IMR-90 (cell line): ENCODE measurements at regions of chr19 and their contacts with region 1.

Region 1: DNA sequence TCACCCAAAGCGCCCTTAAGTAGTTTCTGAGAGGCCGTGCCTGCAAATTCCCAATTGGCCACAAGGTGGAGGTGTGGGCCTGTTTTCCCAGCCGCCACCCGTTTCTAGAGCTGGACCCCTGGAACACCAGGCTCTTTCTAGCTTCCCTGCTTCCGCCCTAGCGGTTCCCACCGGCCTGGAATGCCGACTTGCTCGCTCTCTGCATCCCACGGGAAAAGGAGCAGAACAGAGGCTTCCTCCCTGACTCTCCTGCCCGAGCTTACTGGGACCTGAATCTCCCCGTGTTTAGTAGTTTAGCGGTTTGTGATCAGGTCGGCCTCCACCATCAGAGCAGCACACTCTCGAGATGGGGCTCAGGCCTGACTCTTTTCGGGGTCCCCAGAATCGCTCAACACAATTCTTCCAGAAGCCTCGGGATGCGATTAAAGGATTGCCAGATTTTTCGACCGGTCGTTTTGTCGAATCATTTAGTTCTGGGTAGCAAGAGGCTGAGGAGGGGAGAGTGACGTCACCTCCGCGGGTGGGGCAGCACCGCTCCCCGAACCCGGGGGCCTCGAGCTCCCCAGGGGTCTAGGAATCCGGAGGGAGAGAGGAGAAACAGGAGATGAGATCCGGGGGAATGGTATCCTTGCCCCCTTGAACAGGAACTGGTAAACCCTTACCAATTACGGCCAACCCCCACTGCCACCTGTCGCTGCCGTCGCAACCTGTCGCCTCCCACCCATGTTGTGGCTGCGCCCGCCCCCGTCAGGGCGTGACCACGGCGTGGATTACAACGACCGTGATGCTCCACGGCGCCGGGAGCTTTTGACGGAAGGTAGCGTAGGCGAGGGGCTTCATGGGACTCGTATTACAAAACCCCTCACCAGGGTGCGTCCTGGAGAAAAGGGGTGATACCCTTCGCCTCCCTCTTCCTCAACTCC is 8.0 kb downstream of the NAPSA start:
- DNase-seq: peak; percentile 41
- ATAC-seq: peak; percentile 96
- H3K4me3 ChIP-seq: peak overlapping the region; percentile 36
- H3K27ac ChIP-seq: no peak overlapping the region
- H3K4me1 ChIP-seq: no peaks in the 10 kb centered on the region
- H3K27me3 ChIP-seq: peaks cover 6% of the 10 kb centered on the region; the same call in 1 of the 2 replicates
- CTCF ChIP-seq: peak; percentile 75
- POLR2A ChIP-seq: no peak
- RAD21 ChIP-seq: peak; percentile 72

Region 2: DNA sequence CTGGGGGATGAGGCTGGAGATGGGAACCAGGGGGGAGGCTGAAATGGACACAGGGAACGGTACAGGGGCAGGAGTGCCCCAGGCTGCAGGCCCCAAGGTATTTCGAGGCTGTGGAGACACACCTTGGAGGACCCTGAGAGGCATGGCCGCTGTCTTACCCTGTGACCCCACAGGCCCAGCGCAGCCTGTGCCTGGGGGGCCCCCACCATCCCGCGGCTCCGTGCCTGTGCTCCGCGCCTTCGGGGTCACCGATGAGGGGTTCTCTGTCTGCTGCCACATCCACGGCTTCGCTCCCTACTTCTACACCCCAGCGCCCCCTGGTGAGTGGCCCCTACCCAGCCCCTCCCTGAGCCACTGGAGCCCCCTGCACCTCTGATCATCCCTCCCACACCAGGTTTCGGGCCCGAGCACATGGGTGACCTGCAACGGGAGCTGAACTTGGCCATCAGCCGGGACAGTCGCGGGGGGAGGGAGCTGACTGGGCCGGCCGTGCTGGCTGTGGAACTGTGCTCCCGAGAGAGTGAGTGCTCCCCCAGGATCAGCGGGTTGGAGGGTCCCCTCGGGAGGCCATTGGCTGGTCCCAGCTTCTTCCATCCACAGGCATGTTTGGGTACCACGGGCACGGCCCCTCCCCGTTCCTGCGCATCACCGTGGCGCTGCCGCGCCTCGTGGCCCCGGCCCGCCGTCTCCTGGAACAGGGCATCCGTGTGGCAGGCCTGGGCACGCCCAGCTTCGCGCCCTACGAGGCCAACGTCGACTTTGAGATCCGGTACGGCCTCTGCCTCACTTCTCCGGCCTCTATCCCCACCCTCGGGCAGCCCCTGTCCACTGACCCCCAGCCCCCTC is 44.4 kb after region 1 on chr19:
- CTCF ChIA-PET with region 1: no interaction called
- POLR2A ChIA-PET with region 1: no interaction called
- dilution Hi-C with region 1: no loop called
- in situ Hi-C with region 1: no loop called
- intact Hi-C with region 1: no loop called
- DNase-seq: no peak
- ATAC-seq: no peak
- H3K4me3 ChIP-seq: no peak overlapping the region
- H3K27ac ChIP-seq: no peak overlapping the region
- H3K4me1 ChIP-seq: no peaks in the 10 kb centered on the region
- H3K27me3 ChIP-seq: no peaks in the 10 kb centered on the region
- CTCF ChIP-seq: no peak
- POLR2A ChIP-seq: no peak
- RAD21 ChIP-seq: no peak

Region 3: GRCh38 chr19:50461066-50461875 is 103.8 kb after region 1 on chr19:
- CTCF ChIA-PET with region 1: interaction called, 7 read pairs
- POLR2A ChIA-PET with region 1: no interaction called
- dilution Hi-C with region 1: no loop called
- in situ Hi-C with region 1: no loop called
- intact Hi-C with region 1: loop called (anchors 1 kb)
- DNase-seq: peak; percentile 64
- ATAC-seq: peak; percentile 91
- H3K4me3 ChIP-seq: no peak overlapping the region
- H3K27ac ChIP-seq: no peak overlapping the region
- H3K4me1 ChIP-seq: no peaks in the 10 kb centered on the region
- H3K27me3 ChIP-seq: peaks cover 14% of the 10 kb centered on the region; the same call in 1 of the 2 replicates
- CTCF ChIP-seq: peak; percentile 84
- POLR2A ChIP-seq: no peak
- RAD21 ChIP-seq: peak; percentile 80

Region 4: GRCh38 chr19:50556282-50557008 is 199.0 kb after region 1 on chr19:
- CTCF ChIA-PET with region 1: no interaction called
- POLR2A ChIA-PET with region 1: no interaction called
- dilution Hi-C with region 1: no loop called
- in situ Hi-C with region 1: no loop called
- intact Hi-C with region 1: loop called (anchors 1 kb)
- DNase-seq: peak; percentile 59
- ATAC-seq: peak; percentile 95
- H3K4me3 ChIP-seq: peak overlapping the region; percentile 76
- H3K27ac ChIP-seq: no peak overlapping the region
- H3K4me1 ChIP-seq: no peaks in the 10 kb centered on the region; the same call in 1 of the 2 replicates
- H3K27me3 ChIP-seq: peaks cover 30% of the 10 kb centered on the region
- CTCF ChIP-seq: peak; percentile 72
- POLR2A ChIP-seq: no peak
- RAD21 ChIP-seq: peak; percentile 42